ENCODE measurements at regions of chr11 and their contacts with region 1.

Region 1: GRCh38 chr11:10725114-10725906 is 25.7 kb upstream of the CTR9 start:
- DNase-seq: no peak
- H3K4me3 ChIP-seq: no peak overlapping the region
- H3K27ac ChIP-seq: no peak overlapping the region
- H3K4me1 ChIP-seq: no peaks in the 10 kb centered on the region
- H3K27me3 ChIP-seq: no peaks in the 10 kb centered on the region
- CTCF ChIP-seq: no peak
- POLR2A ChIP-seq: no peak

Region 2: DNA sequence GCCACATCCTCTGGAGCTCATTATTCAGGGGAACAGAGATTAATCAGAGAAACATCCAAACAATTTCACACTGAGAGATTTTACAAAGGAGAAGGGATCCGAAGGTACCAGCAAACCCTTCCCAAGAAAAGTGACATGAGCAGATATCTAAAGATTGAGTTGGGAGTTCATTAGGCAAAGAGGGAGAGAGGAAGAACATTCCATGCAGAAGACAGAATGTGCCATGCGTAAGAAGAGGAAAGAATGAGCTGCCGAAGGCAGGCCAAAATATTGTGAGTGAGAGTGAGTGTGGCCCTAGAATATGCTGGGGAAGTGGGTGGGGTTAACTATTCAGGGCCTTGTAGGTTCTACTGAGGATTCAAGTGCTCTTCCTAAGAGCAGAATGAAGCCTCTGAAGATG is 106.8 kb before region 1 on chr11:
- intact Hi-C with region 1: no loop called
- DNase-seq: no peak
- H3K4me3 ChIP-seq: no peak overlapping the region
- H3K27ac ChIP-seq: peak overlapping the region in 3 of 5 donors; percentile 13 to 68 (median 35)
- H3K4me1 ChIP-seq: peaks cover 0 to 8% of the 10 kb centered on the region in 2 donors
- H3K27me3 ChIP-seq: no peaks in the 10 kb centered on the region
- CTCF ChIP-seq: no peak
- POLR2A ChIP-seq: no peak

Region 3: GRCh38 chr11:10628508-10629236 is 96.6 kb before region 1 on chr11:
- intact Hi-C with region 1: loop called in 1 of 2 experiments (anchors 5 kb)
- DNase-seq: peak in 2 of 7 donors; percentile 10 to 18
- H3K4me3 ChIP-seq: no peak overlapping the region
- H3K27ac ChIP-seq: no peak overlapping the region
- H3K4me1 ChIP-seq: peaks cover 22 to 27% of the 10 kb centered on the region in 2 donors
- H3K27me3 ChIP-seq: no peaks in the 10 kb centered on the region
- CTCF ChIP-seq: no peak
- POLR2A ChIP-seq: no peak

Region 4: DNA sequence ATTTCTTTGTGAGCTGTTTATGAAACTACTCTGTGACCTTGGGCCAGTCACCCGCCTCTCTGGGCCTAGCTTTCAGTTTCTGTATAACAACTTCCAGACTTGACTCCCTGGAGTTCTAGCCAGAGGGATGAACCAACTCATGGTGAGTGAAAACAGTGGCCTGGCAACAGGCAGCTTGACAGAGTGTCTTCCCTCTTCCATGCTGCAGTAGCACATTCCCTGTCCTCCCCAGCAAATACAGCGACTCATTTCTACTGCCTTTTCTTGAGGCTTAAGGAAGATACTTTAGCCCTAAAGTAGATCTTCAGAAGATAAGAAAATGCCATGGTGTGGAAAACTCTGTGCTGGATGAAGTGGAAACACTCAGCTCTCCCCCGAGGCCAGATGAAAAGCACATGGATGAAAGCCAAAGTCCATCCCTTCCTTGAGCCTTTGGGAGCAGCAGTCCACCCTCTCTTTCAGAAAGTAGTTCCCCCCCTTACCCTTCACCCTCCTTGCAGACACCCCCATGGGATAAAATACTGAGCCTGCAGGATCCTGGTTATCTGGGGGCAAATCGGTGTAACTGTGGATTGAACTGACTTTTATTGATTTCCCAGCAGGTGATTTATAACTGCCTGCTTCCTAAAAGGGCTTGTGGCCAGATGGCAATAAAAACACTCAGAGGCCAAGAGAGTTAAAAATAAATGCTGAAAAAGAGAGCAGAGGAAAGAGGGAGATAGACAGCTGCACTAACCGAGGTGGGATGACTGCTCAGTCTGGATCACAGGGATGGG is 55.9 kb before region 1 on chr11:
- intact Hi-C with region 1: loop called in 1 of 2 experiments (anchors 10 kb)
- DNase-seq: peak; percentile 62 to 90 (median 79)
- H3K4me3 ChIP-seq: no peak overlapping the region
- H3K27ac ChIP-seq: peak overlapping the region; percentile 67 to 81 (median 76)
- H3K4me1 ChIP-seq: peaks cover 14 to 32% of the 10 kb centered on the region in 2 donors
- H3K27me3 ChIP-seq: no peaks in the 10 kb centered on the region
- CTCF ChIP-seq: peak in 1 of 6 experiments; percentile 2
- POLR2A ChIP-seq: no peak